MCF 10A (cell line): ENCODE measurements at regions of chr7 and their contacts with region 1.

Region 1: GRCh38 chr7:87416682-87417587 is 58.5 kb downstream of the ABCB4 start:
- DNase-seq: peak; percentile 71
- H3K4me3 Mint-ChIP-seq: no peak overlapping the region
- H3K27ac Mint-ChIP-seq: no peak overlapping the region
- H3K4me1 Mint-ChIP-seq: no peaks in the 10 kb centered on the region
- H3K27me3 Mint-ChIP-seq: peaks cover 10% of the 10 kb centered on the region
- CTCF ChIP-seq: peak; percentile 59

Region 2: GRCh38 chr7:87300756-87301155 is 116.2 kb before region 1 on chr7:
- CTCF ChIA-PET with region 1: interaction called, 494 read pairs
- POLR2A ChIA-PET with region 1: no interaction called
- intact Hi-C with region 1: no loop called
- DNase-seq: no peak
- H3K4me3 Mint-ChIP-seq: no peak overlapping the region
- H3K27ac Mint-ChIP-seq: no peak overlapping the region
- H3K4me1 Mint-ChIP-seq: no peaks in the 10 kb centered on the region
- H3K27me3 Mint-ChIP-seq: peaks cover 8% of the 10 kb centered on the region
- CTCF ChIP-seq: no peak

Region 3: GRCh38 chr7:87345166-87345927 is 71.6 kb before region 1 on chr7 and contains the start of gene CROT:
- CTCF ChIA-PET with region 1: interaction called, 9 read pairs
- POLR2A ChIA-PET with region 1: interaction called, 11 read pairs
- intact Hi-C with region 1: no loop called
- DNase-seq: peak; percentile 96
- H3K4me3 Mint-ChIP-seq: peak within 1 kb of the TSS; percentile 99
- H3K27ac Mint-ChIP-seq: peak within 1 kb of the TSS; percentile 88
- H3K4me1 Mint-ChIP-seq: peaks cover 28% of the 10 kb centered on the region
- H3K27me3 Mint-ChIP-seq: no peaks in the 10 kb centered on the region
- CTCF ChIP-seq: no peak
- total RNA-seq, gene CROT: 5.7 and 6.5 TPM in 2 replicates

Region 4: GRCh38 chr7:87404674-87405073 is 12.3 kb before region 1 on chr7:
- CTCF ChIA-PET with region 1: interaction called, 33 read pairs
- POLR2A ChIA-PET with region 1: interaction called, 4 read pairs
- intact Hi-C with region 1: no loop called
- DNase-seq: no peak
- H3K4me3 Mint-ChIP-seq: no peak overlapping the region
- H3K27ac Mint-ChIP-seq: no peak overlapping the region
- H3K4me1 Mint-ChIP-seq: no peaks in the 10 kb centered on the region
- H3K27me3 Mint-ChIP-seq: no peaks in the 10 kb centered on the region
- CTCF ChIP-seq: no peak